ENCODE measurements at regions of chr1 and their contacts with region 1.

Region 1: DNA sequence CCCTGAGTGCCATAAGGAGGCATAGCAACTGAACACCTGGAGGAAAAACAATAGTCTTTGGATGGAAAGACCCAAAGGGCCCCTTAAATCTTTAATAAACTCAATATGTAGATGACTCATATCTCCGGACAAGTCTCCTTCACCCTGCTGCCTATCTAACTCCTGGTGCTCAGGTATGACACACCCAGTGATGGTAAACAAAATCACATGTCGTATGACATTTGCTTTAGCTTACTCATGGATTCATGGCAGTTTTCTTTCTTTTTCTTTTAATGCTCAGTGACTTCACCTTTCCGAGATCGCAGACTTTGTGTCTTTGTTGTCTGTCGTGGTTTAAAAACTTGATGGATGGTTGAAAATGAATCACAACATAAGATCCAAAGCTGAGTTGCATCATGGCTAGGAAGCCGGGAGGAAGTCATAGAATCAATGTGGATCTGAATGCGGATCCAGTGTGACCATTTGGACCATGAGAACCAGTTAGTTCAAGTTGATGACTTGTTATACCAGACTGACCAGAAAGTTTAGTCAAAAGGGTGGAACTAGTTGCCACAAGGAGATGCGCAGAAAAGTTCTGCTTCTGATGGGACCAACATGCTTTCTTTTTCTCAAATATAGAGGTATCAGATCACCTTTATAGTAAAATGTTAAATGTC is 208.4 kb upstream of the PROX1 start:
- DNase-seq: no peak
- ATAC-seq: no peak
- H3K4me3 ChIP-seq: no peak overlapping the region
- H3K27ac ChIP-seq: no peak overlapping the region
- H3K4me1 ChIP-seq: no peaks in the 10 kb centered on the region
- H3K27me3 ChIP-seq: peaks cover 3 to 7% of the 10 kb centered on the region in 2 experiments; a peak in 2 of 5 replicates
- CTCF ChIP-seq: no peak
- EP300 ChIP-seq: no peak
- POLR2A ChIP-seq: no peak
- RAD21 ChIP-seq: no peak

Region 2: DNA sequence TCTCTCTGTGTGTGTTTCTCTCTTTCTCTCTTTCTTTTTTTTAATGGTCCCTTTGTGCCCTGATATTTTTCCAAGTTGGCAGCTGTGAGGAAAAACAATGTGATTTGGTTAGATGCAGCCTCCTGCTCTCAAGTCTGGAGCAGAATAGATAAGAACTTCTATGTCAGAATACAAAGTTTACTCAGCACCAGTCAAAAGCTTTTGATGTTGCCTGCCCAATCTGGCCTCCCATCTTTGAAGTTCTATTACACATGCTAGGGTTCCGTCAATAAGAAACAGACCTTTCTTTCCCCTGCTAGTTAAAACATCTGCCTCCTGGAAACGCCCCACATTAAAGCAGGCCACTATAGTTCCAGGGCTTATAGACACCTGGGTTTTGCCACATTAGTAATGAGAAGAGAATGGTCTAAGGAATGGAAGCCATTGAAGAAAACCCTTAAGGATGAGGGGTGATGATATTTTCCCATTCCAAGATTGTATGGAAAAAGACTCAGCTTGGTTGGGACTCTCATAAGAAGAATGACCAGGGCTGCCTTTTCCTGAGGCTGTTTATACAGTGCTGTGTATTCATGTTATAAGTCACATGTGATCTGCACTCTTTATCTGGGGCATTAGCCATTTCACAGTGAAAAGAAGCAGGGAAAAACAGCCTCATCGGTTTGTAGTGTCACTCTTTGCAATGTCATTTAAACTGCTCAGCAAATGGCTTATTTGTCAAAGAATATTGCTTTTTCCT is 206.3 kb before region 1 on chr1:
- CTCF ChIA-PET with region 1: no interaction called
- POLR2A ChIA-PET with region 1: no interaction called
- in situ Hi-C with region 1: no loop called
- intact Hi-C with region 1: no loop called
- DNase-seq: no peak
- ATAC-seq: no peak
- H3K4me3 ChIP-seq: no peak overlapping the region
- H3K27ac ChIP-seq: no peak overlapping the region
- H3K4me1 ChIP-seq: no peaks in the 10 kb centered on the region
- H3K27me3 ChIP-seq: peaks cover 0 to 6% of the 10 kb centered on the region in 2 experiments; a peak in 1 of 5 replicates
- CTCF ChIP-seq: no peak
- EP300 ChIP-seq: no peak
- POLR2A ChIP-seq: no peak
- RAD21 ChIP-seq: no peak

Region 3: DNA sequence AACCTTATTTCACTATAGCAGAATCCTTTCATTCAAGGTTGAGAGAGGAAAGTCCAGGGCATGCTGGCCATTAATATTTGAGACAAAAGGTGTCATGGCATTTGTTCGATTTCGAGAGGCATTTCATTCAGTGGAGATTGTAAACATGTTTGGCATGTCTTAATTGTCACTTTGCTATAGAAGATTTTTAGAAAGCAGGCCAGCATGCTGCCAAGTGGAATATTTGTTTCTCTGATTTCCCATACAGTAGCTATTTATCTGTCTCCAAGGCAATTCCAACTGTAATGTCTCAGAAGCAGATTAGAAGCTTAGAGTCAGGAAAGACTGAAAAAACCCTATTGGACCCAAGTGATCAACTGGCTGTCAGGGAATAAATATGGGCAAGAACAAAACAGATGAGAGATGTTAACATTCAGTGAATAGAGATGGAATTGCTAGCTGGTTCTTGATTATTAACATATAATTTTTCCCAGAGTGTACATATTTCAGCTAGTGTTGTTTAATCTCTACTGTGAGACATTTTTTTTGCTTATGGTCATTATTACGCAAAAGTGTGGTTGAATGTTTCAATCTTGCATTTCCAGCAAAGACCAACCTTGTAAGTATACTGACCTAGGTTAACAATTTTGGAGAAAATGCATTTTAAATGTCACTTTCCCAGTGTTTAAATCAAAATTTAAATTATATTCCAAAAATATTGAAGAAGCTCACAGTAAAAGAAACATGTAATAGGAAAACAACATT is 1477.8 kb after region 1 on chr1:
- CTCF ChIA-PET with region 1: no interaction called
- POLR2A ChIA-PET with region 1: no interaction called
- in situ Hi-C with region 1: loop called (anchors 10 kb)
- intact Hi-C with region 1: no loop called
- DNase-seq: no peak
- ATAC-seq: no peak
- H3K4me3 ChIP-seq: no peak overlapping the region
- H3K27ac ChIP-seq: no peak overlapping the region
- H3K4me1 ChIP-seq: no peaks in the 10 kb centered on the region
- H3K27me3 ChIP-seq: no peaks in the 10 kb centered on the region
- CTCF ChIP-seq: no peak
- EP300 ChIP-seq: no peak
- POLR2A ChIP-seq: no peak
- RAD21 ChIP-seq: no peak